CD14-positive monocyte (primary cell): ENCODE measurements at regions of chr12 and their contacts with region 1.

Region 1: DNA sequence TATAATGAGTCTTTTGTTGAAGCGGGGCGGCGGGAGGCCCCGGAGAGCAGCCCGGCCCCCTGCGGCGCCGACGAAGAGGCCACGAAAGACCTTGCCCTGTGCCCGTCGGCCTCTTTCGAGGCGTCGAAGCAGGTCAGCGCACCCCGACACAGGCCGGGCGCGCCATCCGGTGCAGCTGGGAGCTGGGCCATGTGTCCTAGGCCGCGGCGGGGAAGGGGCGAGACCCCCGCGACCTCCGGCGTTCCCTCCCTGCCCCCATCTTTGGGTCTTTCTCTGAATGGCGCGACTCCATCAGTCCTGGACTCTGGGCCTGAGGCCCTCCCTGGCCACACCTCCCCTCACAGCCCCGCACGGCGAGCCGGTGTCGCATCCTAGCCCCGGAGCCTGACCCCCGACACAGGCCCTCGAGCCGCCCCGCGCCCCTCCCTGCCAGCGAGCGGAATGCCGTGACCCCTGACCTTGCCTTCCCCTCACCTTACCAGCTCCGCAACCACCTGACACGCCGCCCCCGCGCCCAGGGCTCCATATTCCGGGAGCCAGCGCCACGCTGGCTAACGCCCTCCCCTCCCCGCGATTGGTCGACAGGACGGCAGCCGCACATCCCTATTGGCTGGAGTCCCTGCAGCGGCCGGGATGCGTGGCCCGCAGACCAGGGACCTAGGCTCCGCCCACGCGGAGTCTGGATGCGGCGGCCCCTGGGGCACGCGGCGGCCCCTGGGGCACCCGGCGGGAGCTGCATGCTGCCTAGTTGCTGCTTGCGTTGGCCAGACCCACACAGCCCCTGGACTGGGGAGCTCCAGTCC is at the start of gene SLC11A2:
- DNase-seq: peak; percentile 88 to 95 (median 91)
- H3K4me3 ChIP-seq: peak within 1 kb of the TSS; percentile 48 to 93 (median 74)
- H3K4me3 Mint-ChIP-seq: peak within 1 kb of the TSS; percentile 94 to 98
- H3K27ac ChIP-seq: peak within 1 kb of the TSS; percentile 65 to 88
- H3K27ac Mint-ChIP-seq: peak within 1 kb of the TSS; percentile 95 to 99 (median 97)
- H3K4me1 ChIP-seq: peaks cover 46 to 68% of the 10 kb centered on the region in 2 donors
- H3K4me1 Mint-ChIP-seq: peaks cover 62% of the 10 kb centered on the region
- H3K27me3 ChIP-seq: no peaks in the 10 kb centered on the region
- H3K27me3 Mint-ChIP-seq: peaks cover 3 to 5% (median 3%) of the 10 kb centered on the region in 3 donors
- CTCF ChIP-seq: peak; percentile 18
- polyA plus RNA-seq, gene SLC11A2: 11.7 to 69.0 (median 14.9) TPM

Region 2: GRCh38 chr12:50825372-50825838 is 200.6 kb before region 1 on chr12:
- intact Hi-C with region 1: loop called (anchors 5 kb)
- DNase-seq: peak; percentile 33 to 73 (median 62)
- H3K4me3 ChIP-seq: no peak overlapping the region
- H3K4me3 Mint-ChIP-seq: no peak overlapping the region
- H3K27ac ChIP-seq: no peak overlapping the region
- H3K27ac Mint-ChIP-seq: peak overlapping the region in 1 of 7 donors; percentile 49
- H3K4me1 ChIP-seq: peaks cover 0 to 3% of the 10 kb centered on the region in 2 donors
- H3K4me1 Mint-ChIP-seq: peaks cover 5% of the 10 kb centered on the region
- H3K27me3 ChIP-seq: no peaks in the 10 kb centered on the region
- H3K27me3 Mint-ChIP-seq: peaks cover 1 to 3% (median 2%) of the 10 kb centered on the region in 3 donors
- CTCF ChIP-seq: peak; percentile 76

Region 3: DNA sequence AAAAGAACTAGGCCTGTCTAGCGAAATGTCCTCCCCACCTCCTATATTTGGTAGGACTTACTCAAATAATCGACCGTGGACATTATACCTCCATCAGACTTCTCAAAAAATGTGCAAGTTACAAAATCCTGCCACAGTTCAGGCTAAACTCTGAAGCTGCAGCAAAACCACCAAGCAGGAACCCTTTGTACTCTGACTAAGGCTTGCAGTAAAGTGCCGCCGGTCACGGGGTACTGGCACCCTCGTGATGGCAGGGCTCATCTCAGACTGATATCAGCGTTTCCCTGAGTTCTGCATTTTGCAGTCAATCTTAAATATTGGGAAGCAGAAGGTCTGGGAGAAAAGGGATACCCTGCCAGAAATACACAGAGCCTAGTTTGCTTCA is 17.0 kb before region 1 on chr12:
- intact Hi-C with region 1: loop called in 1 of 2 experiments (anchors 2 kb)
- DNase-seq: peak; percentile 87 to 95 (median 93)
- H3K4me3 ChIP-seq: peak overlapping the region; percentile 20 to 74 (median 59)
- H3K4me3 Mint-ChIP-seq: peak overlapping the region; percentile 60 to 85
- H3K27ac ChIP-seq: peak overlapping the region; percentile 54 to 90
- H3K27ac Mint-ChIP-seq: peak overlapping the region; percentile 88 to 96 (median 92)
- H3K4me1 ChIP-seq: peaks cover 22 to 31% of the 10 kb centered on the region in 2 donors
- H3K4me1 Mint-ChIP-seq: peaks cover 32% of the 10 kb centered on the region
- H3K27me3 ChIP-seq: no peaks in the 10 kb centered on the region
- H3K27me3 Mint-ChIP-seq: no peaks in the 10 kb centered on the region
- CTCF ChIP-seq: no peak

Region 4: DNA sequence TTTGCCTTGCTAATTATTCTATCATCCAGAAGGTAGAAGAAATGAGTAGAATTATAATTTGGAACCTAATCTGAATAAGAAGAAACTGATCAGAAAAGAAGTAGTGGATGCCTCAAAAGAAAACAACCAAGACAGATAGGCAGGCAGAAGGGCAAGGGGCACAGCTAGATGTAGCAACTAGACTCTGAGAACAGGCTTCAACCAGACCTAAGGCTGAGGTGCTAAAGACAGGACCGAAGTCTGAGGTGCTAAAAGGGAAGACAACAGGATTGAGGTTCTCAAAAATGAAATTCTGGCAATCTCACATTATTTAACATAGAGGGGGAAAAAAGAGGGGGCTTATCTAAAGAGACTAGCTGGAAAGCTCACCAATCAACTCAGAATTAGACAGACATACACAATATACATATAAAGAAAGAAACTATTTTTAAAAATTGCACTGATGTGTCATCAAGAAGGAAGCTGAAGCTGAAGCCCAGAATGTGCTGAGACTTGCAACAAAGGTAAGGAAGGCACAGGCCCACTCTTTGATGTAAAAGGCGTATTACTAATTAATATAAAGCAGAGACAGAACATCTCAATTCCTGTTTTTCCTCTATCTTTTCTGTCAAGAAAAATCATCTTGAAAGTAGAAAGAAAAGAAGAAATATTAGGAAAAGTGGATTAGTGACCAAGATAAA is 101.2 kb after region 1 on chr12:
- intact Hi-C with region 1: no loop called
- DNase-seq: no peak
- H3K4me3 ChIP-seq: no peak overlapping the region
- H3K4me3 Mint-ChIP-seq: no peak overlapping the region
- H3K27ac ChIP-seq: peak overlapping the region in 1 of 2 donors; percentile 1
- H3K27ac Mint-ChIP-seq: peak overlapping the region in 2 of 7 donors; percentile 64 to 70
- H3K4me1 ChIP-seq: no peaks in the 10 kb centered on the region
- H3K4me1 Mint-ChIP-seq: peaks cover 2% of the 10 kb centered on the region
- H3K27me3 ChIP-seq: no peaks in the 10 kb centered on the region
- H3K27me3 Mint-ChIP-seq: no peaks in the 10 kb centered on the region
- CTCF ChIP-seq: no peak

Region 5: GRCh38 chr12:51281202-51281924 is 255.3 kb after region 1 on chr12:
- intact Hi-C with region 1: no loop called
- DNase-seq: no peak
- H3K4me3 ChIP-seq: no peak overlapping the region
- H3K4me3 Mint-ChIP-seq: no peak overlapping the region
- H3K27ac ChIP-seq: no peak overlapping the region
- H3K27ac Mint-ChIP-seq: peak overlapping the region in 2 of 7 donors; percentile 20 to 66
- H3K4me1 ChIP-seq: no peaks in the 10 kb centered on the region
- H3K4me1 Mint-ChIP-seq: peaks cover 3% of the 10 kb centered on the region
- H3K27me3 ChIP-seq: no peaks in the 10 kb centered on the region
- H3K27me3 Mint-ChIP-seq: no peaks in the 10 kb centered on the region
- CTCF ChIP-seq: no peak